Ascending aorta (tissue), 2 donors: ENCODE measurements at regions of chr1 and their contacts with region 1.

Region 1: DNA sequence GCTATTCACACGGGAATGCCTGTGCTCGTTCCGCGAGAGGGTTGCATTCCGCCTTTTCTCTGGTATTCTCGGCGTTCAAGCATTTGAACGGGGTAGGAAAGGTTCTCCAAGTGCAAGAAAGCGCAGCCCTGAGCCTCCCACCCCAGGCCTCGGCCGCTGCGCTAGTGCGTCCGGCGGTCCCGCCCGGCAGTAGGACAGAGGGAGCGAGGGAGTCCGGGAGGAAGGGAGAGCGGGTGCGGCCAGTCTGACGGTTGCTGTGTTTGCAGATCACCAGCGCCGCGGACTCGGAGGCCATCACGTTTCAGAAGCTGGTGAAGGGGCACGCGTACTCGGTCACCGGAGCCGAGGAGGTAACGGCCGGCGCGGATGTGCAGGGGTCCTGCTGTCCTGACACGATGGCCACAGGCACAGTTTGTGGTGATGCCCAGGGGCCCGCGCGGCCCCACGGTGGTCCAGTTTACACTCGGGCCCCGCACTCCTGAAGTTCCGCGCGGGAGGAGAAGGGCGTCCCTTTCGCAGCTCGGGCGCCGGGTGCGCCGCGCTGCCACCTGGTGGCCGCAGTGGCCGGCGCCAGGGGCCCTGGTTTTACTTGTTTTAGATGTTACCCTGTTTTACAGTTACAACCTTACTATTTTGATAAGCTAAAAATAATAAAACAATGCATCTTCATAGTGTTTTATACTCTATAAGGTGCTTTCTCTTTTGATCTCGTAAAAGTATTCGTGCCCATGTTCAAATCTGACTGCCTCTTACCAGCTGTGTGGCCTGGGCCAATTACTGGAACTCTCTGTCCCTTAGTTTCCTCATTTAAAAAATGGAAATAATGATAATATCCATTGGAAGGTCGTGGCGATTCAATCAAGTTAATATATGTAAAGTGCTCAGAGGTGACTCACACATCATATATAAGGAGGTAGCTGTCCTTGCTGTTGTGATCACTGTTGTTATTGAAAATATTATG is 36.7 kb downstream of the CAPN2 start:
- DNase-seq: peak in 1 of 2 donors; percentile 84
- H3K4me3 ChIP-seq: peak overlapping the region; percentile 43 to 61
- H3K27ac ChIP-seq: peak overlapping the region; percentile 50 to 80
- H3K4me1 ChIP-seq: peaks cover 9 to 21% of the 10 kb centered on the region in 2 donors
- H3K27me3 ChIP-seq: no peaks in the 10 kb centered on the region
- CTCF ChIP-seq: peak; percentile 91 to 94 (median 94)

Region 2: DNA sequence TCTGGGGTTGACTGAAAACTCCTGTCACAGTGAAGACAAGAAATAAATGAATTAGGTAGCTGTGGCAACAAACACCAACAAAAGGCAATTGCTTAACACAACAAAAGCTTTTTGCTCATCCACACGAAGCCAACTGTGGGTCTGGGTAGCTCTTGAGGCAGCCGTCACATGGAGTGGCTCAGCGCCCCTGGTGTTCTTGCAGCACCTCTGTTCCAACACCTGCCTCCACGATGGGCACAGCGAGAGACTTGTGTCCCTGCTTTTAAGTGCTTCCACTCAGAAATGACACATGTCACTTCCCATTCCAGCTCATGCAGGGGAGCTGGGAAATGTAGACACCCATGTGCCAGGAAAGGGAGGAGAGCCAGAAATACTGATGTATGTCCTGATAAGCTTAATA is 1642.7 kb before region 1 on chr1:
- intact Hi-C with region 1: no loop called
- DNase-seq: no peak
- H3K4me3 ChIP-seq: no peak overlapping the region
- H3K27ac ChIP-seq: no peak overlapping the region
- H3K4me1 ChIP-seq: no peaks in the 10 kb centered on the region
- H3K27me3 ChIP-seq: no peaks in the 10 kb centered on the region
- CTCF ChIP-seq: no peak

Region 3: GRCh38 chr1:223700942-223701637 is 48.0 kb before region 1 on chr1:
- intact Hi-C with region 1: loop called (anchors 1 kb)
- DNase-seq: peak in 1 of 2 donors; percentile 86
- H3K4me3 ChIP-seq: peak overlapping the region in 1 of 2 donors; percentile 53
- H3K27ac ChIP-seq: peak overlapping the region; percentile 93 to 94
- H3K4me1 ChIP-seq: peaks cover 10 to 43% of the 10 kb centered on the region in 2 donors
- H3K27me3 ChIP-seq: no peaks in the 10 kb centered on the region
- CTCF ChIP-seq: no peak